HCT116 (cell line): ENCODE measurements at regions of chr1 and their contacts with region 1.

Region 1: GRCh38 chr1:53278201-53278725 is 39.9 kb upstream of the MAGOH start:
- DNase-seq: no peak
- ATAC-seq: peak; percentile 86
- H3K4me3 ChIP-seq: no peak overlapping the region
- H3K27ac ChIP-seq: no peak overlapping the region
- H3K4me1 ChIP-seq: peaks cover 0 to 9% of the 10 kb centered on the region in 2 experiments; a peak in 1 of 4 replicates
- H3K27me3 ChIP-seq: no peaks in the 10 kb centered on the region
- CTCF ChIP-seq: peak; percentile 78 to 93 (median 90)
- POLR2A ChIP-seq: no peak
- RAD21 ChIP-seq: peak; percentile 91

Region 2: GRCh38 chr1:53475639-53476038 is 197.4 kb after region 1 on chr1:
- CTCF ChIA-PET with region 1: no interaction called
- POLR2A ChIA-PET with region 1: no interaction called
- RAD21 ChIA-PET with region 1: no interaction called
- intact Hi-C with region 1: loop called (anchors 2 kb)
- DNase-seq: no peak
- ATAC-seq: no peak
- H3K4me3 ChIP-seq: no peak overlapping the region
- H3K27ac ChIP-seq: no peak overlapping the region
- H3K4me1 ChIP-seq: peaks cover 0 to 1% of the 10 kb centered on the region in 2 experiments; a peak in 3 of 4 replicates
- H3K27me3 ChIP-seq: no peaks in the 10 kb centered on the region
- CTCF ChIP-seq: no peak
- POLR2A ChIP-seq: no peak
- RAD21 ChIP-seq: no peak

Region 3: GRCh38 chr1:53681977-53682685 is 403.9 kb after region 1 on chr1:
- CTCF ChIA-PET with region 1: no interaction called
- POLR2A ChIA-PET with region 1: no interaction called
- RAD21 ChIA-PET with region 1: no interaction called
- intact Hi-C with region 1: loop called (anchors 10 kb)
- DNase-seq: peak; percentile 27
- ATAC-seq: peak; percentile 80
- H3K4me3 ChIP-seq: no peak overlapping the region
- H3K27ac ChIP-seq: no peak overlapping the region
- H3K4me1 ChIP-seq: peaks cover 24 to 25% of the 10 kb centered on the region in 2 experiments
- H3K27me3 ChIP-seq: peaks cover 4% of the 10 kb centered on the region; the same call in 1 of the 2 replicates
- CTCF ChIP-seq: peak; percentile 79 to 84 (median 82); a peak in 5 of 6 replicates
- POLR2A ChIP-seq: no peak
- RAD21 ChIP-seq: peak; percentile 86